CD4-positive, alpha-beta memory T cell (primary cell): ENCODE measurements at regions of chr7 and their contacts with region 1.

Region 1: DNA sequence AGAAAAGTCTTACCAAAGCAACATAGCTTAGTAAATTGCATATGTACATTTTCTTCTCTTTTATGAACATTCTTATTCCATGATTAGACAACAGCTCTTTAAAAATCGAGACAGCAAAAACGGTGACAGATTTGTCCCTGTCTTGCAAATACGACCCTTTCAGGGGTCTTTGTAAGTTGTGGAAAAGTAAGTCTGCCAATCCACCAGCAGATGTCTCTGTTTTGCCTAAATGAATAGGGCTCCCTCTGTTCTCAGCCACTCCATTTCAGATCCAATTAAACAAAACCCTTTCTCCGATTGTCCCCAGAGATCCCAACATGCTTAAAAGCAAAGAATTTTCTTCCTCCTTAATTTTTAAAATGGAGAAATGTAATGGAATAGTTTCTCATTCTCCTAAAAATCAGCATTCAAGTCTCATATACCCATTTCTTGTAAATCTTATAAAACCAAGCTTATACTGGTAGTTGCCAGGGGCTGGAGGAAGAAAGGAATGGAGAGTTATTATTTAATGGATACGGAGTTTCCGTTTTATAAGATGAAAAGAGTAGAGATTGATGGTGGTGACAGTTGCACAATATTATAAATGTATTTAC is 61.0 kb upstream of the NFE2L3 start:
- DNase-seq: peak in 4 of 5 donors; percentile 40 to 45 (median 44)
- H3K4me3 ChIP-seq: no peak overlapping the region
- H3K4me3 Mint-ChIP-seq: peak overlapping the region in 2 of 8 donors; percentile 5 to 20
- H3K27ac ChIP-seq: no peak overlapping the region
- H3K27ac Mint-ChIP-seq: peak overlapping the region in 2 of 7 donors; percentile 0
- H3K4me1 ChIP-seq: no peaks in the 10 kb centered on the region
- H3K4me1 Mint-ChIP-seq: peaks cover 4 to 18% (median 12%) of the 10 kb centered on the region in 4 donors
- H3K27me3 ChIP-seq: no peaks in the 10 kb centered on the region
- H3K27me3 Mint-ChIP-seq: no peaks in the 10 kb centered on the region

Region 2: GRCh38 chr7:25894902-25895791 is 195.9 kb before region 1 on chr7:
- CTCF ChIA-PET with region 1: interaction called, 33 read pairs
- POLR2A ChIA-PET with region 1: no interaction called
- intact Hi-C with region 1: loop called (anchors 1 kb)
- DNase-seq: peak; percentile 44 to 60 (median 51)
- H3K4me3 ChIP-seq: no peak overlapping the region
- H3K4me3 Mint-ChIP-seq: peak overlapping the region; percentile 50 to 94 (median 56)
- H3K27ac ChIP-seq: no peak overlapping the region
- H3K27ac Mint-ChIP-seq: peak overlapping the region in 4 of 7 donors; percentile 9 to 77 (median 43)
- H3K4me1 ChIP-seq: peaks cover 26% of the 10 kb centered on the region
- H3K4me1 Mint-ChIP-seq: peaks cover 16 to 24% (median 21%) of the 10 kb centered on the region in 4 donors
- H3K27me3 ChIP-seq: no peaks in the 10 kb centered on the region
- H3K27me3 Mint-ChIP-seq: peaks cover 0 to 3% of the 10 kb centered on the region in 2 donors

Region 3: GRCh38 chr7:26034391-26034790 is 56.6 kb before region 1 on chr7:
- CTCF ChIA-PET with region 1: no interaction called
- POLR2A ChIA-PET with region 1: no interaction called
- intact Hi-C with region 1: no loop called
- DNase-seq: no peak
- H3K4me3 ChIP-seq: no peak overlapping the region
- H3K4me3 Mint-ChIP-seq: no peak overlapping the region
- H3K27ac ChIP-seq: no peak overlapping the region
- H3K27ac Mint-ChIP-seq: no peak overlapping the region
- H3K4me1 ChIP-seq: no peaks in the 10 kb centered on the region
- H3K4me1 Mint-ChIP-seq: peaks cover 0 to 11% (median under 1%) of the 10 kb centered on the region in 4 donors
- H3K27me3 ChIP-seq: no peaks in the 10 kb centered on the region
- H3K27me3 Mint-ChIP-seq: peaks cover 8 to 32% of the 10 kb centered on the region in 2 donors

Region 4: GRCh38 chr7:26112203-26112740 is 21.2 kb after region 1 on chr7:
- CTCF ChIA-PET with region 1: interaction called, 116 read pairs
- POLR2A ChIA-PET with region 1: interaction called, 3 read pairs
- intact Hi-C with region 1: loop called (anchors 1 kb)
- DNase-seq: peak in 4 of 5 donors; percentile 22 to 38 (median 31)
- H3K4me3 ChIP-seq: no peak overlapping the region
- H3K4me3 Mint-ChIP-seq: peak overlapping the region in 2 of 8 donors; percentile 17 to 39
- H3K27ac ChIP-seq: no peak overlapping the region
- H3K27ac Mint-ChIP-seq: peak overlapping the region in 6 of 7 donors; percentile 20 to 61 (median 30)
- H3K4me1 ChIP-seq: peaks cover 16% of the 10 kb centered on the region
- H3K4me1 Mint-ChIP-seq: peaks cover 6 to 14% (median 9%) of the 10 kb centered on the region in 4 donors
- H3K27me3 ChIP-seq: no peaks in the 10 kb centered on the region
- H3K27me3 Mint-ChIP-seq: no peaks in the 10 kb centered on the region

Region 5: GRCh38 chr7:26187380-26188205 is 96.6 kb after region 1 on chr7:
- CTCF ChIA-PET with region 1: interaction called, 212 read pairs
- POLR2A ChIA-PET with region 1: interaction called, 28 read pairs
- intact Hi-C with region 1: no loop called
- DNase-seq: no peak
- H3K4me3 ChIP-seq: no peak overlapping the region
- H3K4me3 Mint-ChIP-seq: peak overlapping the region in 3 of 8 donors; percentile 7 to 55 (median 17)
- H3K27ac ChIP-seq: no peak overlapping the region
- H3K27ac Mint-ChIP-seq: peak overlapping the region; percentile 52 to 99 (median 75)
- H3K4me1 ChIP-seq: peaks cover 74% of the 10 kb centered on the region
- H3K4me1 Mint-ChIP-seq: peaks cover 51 to 90% (median 74%) of the 10 kb centered on the region in 4 donors
- H3K27me3 ChIP-seq: no peaks in the 10 kb centered on the region
- H3K27me3 Mint-ChIP-seq: no peaks in the 10 kb centered on the region

Region 6: GRCh38 chr7:26278770-26279169 is 187.7 kb after region 1 on chr7:
- CTCF ChIA-PET with region 1: interaction called, 10 read pairs
- POLR2A ChIA-PET with region 1: no interaction called
- intact Hi-C with region 1: no loop called
- DNase-seq: peak in 4 of 5 donors; percentile 14 to 33 (median 26)
- H3K4me3 ChIP-seq: no peak overlapping the region
- H3K4me3 Mint-ChIP-seq: peak overlapping the region in 1 of 8 donors; percentile 25
- H3K27ac ChIP-seq: no peak overlapping the region
- H3K27ac Mint-ChIP-seq: no peak overlapping the region
- H3K4me1 ChIP-seq: peaks cover 5% of the 10 kb centered on the region
- H3K4me1 Mint-ChIP-seq: peaks cover 8 to 19% (median 12%) of the 10 kb centered on the region in 4 donors
- H3K27me3 ChIP-seq: no peaks in the 10 kb centered on the region
- H3K27me3 Mint-ChIP-seq: no peaks in the 10 kb centered on the region

Region 7: DNA sequence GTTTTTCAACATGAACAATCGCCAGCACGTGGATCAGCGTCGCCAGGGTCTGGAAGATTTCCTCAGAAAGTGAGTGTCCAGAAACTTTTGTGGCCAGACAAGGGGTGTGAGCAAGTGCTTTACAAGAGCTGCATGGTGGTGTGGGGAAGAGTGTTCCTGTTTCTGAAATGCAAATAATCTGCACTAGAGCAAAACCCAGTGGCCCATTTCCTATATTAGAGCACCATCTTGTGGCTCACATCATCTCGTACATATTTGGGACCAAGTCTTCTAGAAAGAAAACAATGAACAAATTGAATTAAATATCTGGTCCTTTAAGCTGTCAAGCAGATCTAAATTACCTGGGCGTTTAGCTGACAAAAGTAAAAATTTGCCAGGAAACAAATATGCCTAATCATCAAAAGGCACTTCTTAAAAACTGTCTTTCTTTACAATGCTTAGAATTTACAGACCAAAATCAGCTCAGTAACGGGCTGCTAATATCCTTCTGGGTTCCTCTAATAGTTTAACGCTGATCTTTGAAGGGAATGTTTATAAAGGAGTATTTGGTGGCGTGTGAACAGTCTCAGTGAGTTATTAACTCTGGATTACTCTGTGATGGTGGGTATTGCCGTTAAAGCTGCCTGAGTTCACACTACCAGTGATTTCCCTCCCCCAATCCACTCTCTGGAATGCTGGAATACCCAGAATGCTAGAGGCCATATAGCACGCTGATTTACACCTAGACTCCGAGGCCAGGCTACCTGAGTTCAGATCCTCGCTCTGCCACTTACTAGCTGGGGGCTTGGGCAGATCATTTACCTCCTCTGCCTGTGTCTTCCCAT is 274.3 kb after region 1 on chr7:
- CTCF ChIA-PET with region 1: interaction called, 288 read pairs
- POLR2A ChIA-PET with region 1: interaction called, 7 read pairs
- intact Hi-C with region 1: loop called (anchors 1 kb)
- DNase-seq: peak; percentile 60 to 67 (median 64)
- H3K4me3 ChIP-seq: no peak overlapping the region
- H3K4me3 Mint-ChIP-seq: no peak overlapping the region
- H3K27ac ChIP-seq: no peak overlapping the region
- H3K27ac Mint-ChIP-seq: peak overlapping the region in 2 of 7 donors; percentile 60 to 65
- H3K4me1 ChIP-seq: peaks cover 8% of the 10 kb centered on the region
- H3K4me1 Mint-ChIP-seq: peaks cover 2 to 8% (median 6%) of the 10 kb centered on the region in 4 donors
- H3K27me3 ChIP-seq: no peaks in the 10 kb centered on the region
- H3K27me3 Mint-ChIP-seq: peaks cover 0 to 2% of the 10 kb centered on the region in 2 donors

Region 8: GRCh38 chr7:26667500-26668133 is 576.6 kb after region 1 on chr7:
- CTCF ChIA-PET with region 1: interaction called, 6 read pairs
- POLR2A ChIA-PET with region 1: no interaction called
- intact Hi-C with region 1: loop called (anchors 2 kb)
- DNase-seq: peak; percentile 58 to 67 (median 59)
- H3K4me3 ChIP-seq: no peak overlapping the region
- H3K4me3 Mint-ChIP-seq: no peak overlapping the region
- H3K27ac ChIP-seq: no peak overlapping the region
- H3K27ac Mint-ChIP-seq: no peak overlapping the region
- H3K4me1 ChIP-seq: peaks cover 16% of the 10 kb centered on the region
- H3K4me1 Mint-ChIP-seq: peaks cover 9 to 19% (median 13%) of the 10 kb centered on the region in 4 donors
- H3K27me3 ChIP-seq: no peaks in the 10 kb centered on the region
- H3K27me3 Mint-ChIP-seq: peaks cover 2 to 3% of the 10 kb centered on the region in 2 donors